Transverse colon (tissue), 4 donors: ENCODE measurements at regions of chrX and their contacts with region 1.

Region 1: DNA sequence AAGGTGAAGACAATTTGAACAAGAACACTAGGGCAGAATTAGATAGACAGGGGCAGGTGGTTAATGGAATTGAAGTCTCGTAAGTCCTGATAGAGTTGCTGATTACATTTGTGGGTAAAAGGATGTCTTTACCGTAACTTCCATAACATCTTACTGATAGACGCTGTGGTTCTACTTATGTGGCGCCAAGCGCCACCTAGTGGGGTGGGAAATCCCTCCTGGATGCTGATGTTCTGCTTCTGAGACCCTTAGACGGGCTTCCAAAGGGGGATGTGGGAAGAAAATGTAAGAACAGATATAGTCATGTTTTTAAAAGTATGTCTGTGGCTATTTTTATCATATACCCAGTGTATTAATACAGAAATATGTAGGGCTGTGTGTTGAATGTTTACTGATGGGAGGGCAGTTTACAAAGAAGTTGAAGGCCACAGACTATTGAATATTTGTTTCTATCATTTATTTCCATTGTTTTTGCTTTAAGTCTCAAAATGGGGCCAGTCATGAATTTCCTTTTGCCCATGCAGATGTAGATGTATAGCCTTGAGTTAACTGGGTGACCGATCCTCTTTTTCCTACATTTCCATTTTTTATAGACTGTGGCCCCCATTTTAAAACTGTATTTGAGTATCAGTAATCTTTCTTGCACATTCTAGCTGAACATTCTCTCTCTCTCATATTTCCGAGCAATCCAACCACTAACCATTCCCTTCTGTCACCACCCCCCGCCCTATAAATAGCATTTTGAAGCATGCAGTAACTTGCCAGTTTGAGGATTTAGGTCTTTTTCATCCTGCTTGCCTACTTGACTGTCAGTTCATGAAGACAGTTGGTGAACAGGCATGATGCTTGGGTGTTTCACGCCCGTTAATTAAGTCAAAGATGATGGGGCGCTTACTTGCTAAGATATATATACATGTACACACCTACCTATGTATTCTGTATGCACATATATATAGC is 12.1 kb upstream of the TLR8 start:
- DNase-seq: peak; percentile 37
- H3K4me3 ChIP-seq: no peak overlapping the region
- H3K27ac ChIP-seq: no peak overlapping the region
- H3K4me1 ChIP-seq: no peaks in the 10 kb centered on the region
- H3K27me3 ChIP-seq: no peaks in the 10 kb centered on the region
- CTCF ChIP-seq: peak; percentile 48 to 62 (median 55)
- EP300 ChIP-seq: no peak
- POLR2A ChIP-seq: no peak

Region 2: GRCh38 chrX:12747433-12747832 is 146.9 kb before region 1 on chrX:
- in situ Hi-C with region 1: no loop called
- intact Hi-C with region 1: no loop called
- DNase-seq: no peak
- H3K4me3 ChIP-seq: no peak overlapping the region
- H3K27ac ChIP-seq: no peak overlapping the region
- H3K4me1 ChIP-seq: no peaks in the 10 kb centered on the region
- H3K27me3 ChIP-seq: no peaks in the 10 kb centered on the region
- CTCF ChIP-seq: no peak
- EP300 ChIP-seq: no peak
- POLR2A ChIP-seq: no peak

Region 3: DNA sequence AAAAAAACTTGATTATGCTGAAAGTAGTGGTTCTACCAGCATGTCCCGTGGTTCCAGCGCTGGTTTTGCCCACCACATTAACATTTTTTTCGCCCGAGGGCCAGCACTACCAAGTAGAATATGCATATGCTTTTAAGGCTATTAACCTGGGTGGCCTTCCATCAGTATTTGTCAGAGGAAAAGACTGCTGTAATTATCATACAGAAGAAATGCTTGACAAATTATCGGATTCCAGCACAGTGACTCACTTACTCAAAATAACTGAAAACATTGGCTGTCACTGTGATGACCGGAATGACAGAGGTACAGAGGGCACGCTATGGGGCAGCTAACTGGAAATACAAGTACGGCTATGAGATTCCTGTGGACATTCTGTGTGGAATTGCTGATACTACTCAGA is 68.6 kb before region 1 on chrX:
- in situ Hi-C with region 1: loop called in 1 of 4 experiments (anchors 10 kb)
- intact Hi-C with region 1: no loop called
- DNase-seq: no peak
- H3K4me3 ChIP-seq: no peak overlapping the region
- H3K27ac ChIP-seq: no peak overlapping the region
- H3K4me1 ChIP-seq: no peaks in the 10 kb centered on the region
- H3K27me3 ChIP-seq: no peaks in the 10 kb centered on the region
- CTCF ChIP-seq: no peak
- EP300 ChIP-seq: no peak
- POLR2A ChIP-seq: no peak

Region 4: GRCh38 chrX:13764765-13765164 is 870.4 kb after region 1 on chrX:
- in situ Hi-C with region 1: no loop called
- intact Hi-C with region 1: no loop called
- DNase-seq: no peak
- H3K4me3 ChIP-seq: no peak overlapping the region
- H3K27ac ChIP-seq: peak overlapping the region in 1 of 4 donors; percentile 16
- H3K4me1 ChIP-seq: peaks cover 0 to 3% (median 1%) of the 10 kb centered on the region in 4 donors
- H3K27me3 ChIP-seq: no peaks in the 10 kb centered on the region
- CTCF ChIP-seq: no peak
- EP300 ChIP-seq: no peak
- POLR2A ChIP-seq: no peak